ENCODE measurements at regions of chr9 and their contacts with region 1.

Region 1: GRCh38 chr9:18429070-18429469 is 44.9 kb upstream of the ADAMTSL1 start:
- DNase-seq: no peak
- ATAC-seq: no peak
- H3K4me3 ChIP-seq: no peak overlapping the region
- H3K27ac ChIP-seq: no peak overlapping the region
- H3K4me1 ChIP-seq: peaks cover 0 to 9% (median 0%) of the 10 kb centered on the region in 12 donors
- H3K27me3 ChIP-seq: no peaks in the 10 kb centered on the region
- CTCF ChIP-seq: no peak
- POLR2A ChIP-seq: no peak

Region 2: DNA sequence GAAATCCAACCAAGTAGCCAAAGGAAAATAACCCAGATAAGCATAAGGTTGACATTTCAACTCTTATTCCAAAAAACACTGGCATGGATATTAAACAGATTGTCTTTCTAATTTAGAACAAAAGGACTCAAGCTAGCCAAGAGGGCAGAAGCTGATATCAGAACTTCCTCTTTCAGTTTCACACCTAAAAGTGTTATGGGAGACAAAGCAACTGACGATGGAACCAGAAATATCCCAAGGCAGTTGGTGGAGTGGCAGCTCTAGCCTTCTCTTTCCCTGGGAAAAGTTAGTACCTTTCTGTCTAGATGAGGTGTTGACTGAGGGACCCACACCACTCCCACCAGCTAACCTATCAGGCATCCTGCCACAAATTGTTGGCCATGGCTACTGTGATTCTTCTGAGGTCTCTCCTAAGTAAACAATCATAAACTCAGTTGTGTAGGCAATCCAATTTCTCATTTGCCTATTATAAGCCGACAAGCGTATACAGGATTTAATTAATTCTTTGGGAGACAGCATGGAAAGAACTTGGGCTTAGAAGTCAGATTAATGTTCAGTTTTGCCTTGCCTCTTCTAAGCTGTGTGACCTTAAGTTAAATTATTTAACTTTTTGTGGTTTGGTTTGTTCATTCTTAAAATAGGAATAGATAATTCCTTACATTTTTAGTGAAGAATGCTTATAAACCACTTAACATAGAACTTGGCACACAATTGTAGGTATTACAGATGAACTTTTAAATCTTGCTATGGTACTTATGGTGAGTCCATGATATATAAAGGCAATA is 66.0 kb before region 1 on chr9:
- intact Hi-C with region 1: loop called in 1 of 10 experiments (anchors 10 kb)
- DNase-seq: peak; percentile 35 to 44 (median 36)
- ATAC-seq: peak; percentile 92 to 97 (median 96)
- H3K4me3 ChIP-seq: no peak overlapping the region
- H3K27ac ChIP-seq: peak overlapping the region in 9 of 12 donors; percentile 1 to 65 (median 60)
- H3K4me1 ChIP-seq: peaks cover 0 to 30% (median 12%) of the 10 kb centered on the region in 12 donors
- H3K27me3 ChIP-seq: no peaks in the 10 kb centered on the region
- CTCF ChIP-seq: no peak
- POLR2A ChIP-seq: no peak

Region 3: GRCh38 chr9:18371621-18372020 is 57.4 kb before region 1 on chr9:
- intact Hi-C with region 1: loop called in 2 of 10 experiments (anchors 5 to 10 kb)
- DNase-seq: no peak
- ATAC-seq: no peak
- H3K4me3 ChIP-seq: no peak overlapping the region
- H3K27ac ChIP-seq: peak overlapping the region in 1 of 12 donors; percentile 79
- H3K4me1 ChIP-seq: no peaks in the 10 kb centered on the region
- H3K27me3 ChIP-seq: no peaks in the 10 kb centered on the region
- CTCF ChIP-seq: no peak
- POLR2A ChIP-seq: no peak

Region 4: GRCh38 chr9:18531136-18532065 is 102.3 kb after region 1 on chr9:
- intact Hi-C with region 1: no loop called
- DNase-seq: no peak
- ATAC-seq: no peak
- H3K4me3 ChIP-seq: no peak overlapping the region
- H3K27ac ChIP-seq: no peak overlapping the region
- H3K4me1 ChIP-seq: no peaks in the 10 kb centered on the region
- H3K27me3 ChIP-seq: no peaks in the 10 kb centered on the region
- CTCF ChIP-seq: no peak
- POLR2A ChIP-seq: no peak

Measured in heart left ventricle (tissue), 16 donors.